PC-3 (cell line): ENCODE measurements at regions of chr16 and their contacts with region 1.

Region 1: DNA sequence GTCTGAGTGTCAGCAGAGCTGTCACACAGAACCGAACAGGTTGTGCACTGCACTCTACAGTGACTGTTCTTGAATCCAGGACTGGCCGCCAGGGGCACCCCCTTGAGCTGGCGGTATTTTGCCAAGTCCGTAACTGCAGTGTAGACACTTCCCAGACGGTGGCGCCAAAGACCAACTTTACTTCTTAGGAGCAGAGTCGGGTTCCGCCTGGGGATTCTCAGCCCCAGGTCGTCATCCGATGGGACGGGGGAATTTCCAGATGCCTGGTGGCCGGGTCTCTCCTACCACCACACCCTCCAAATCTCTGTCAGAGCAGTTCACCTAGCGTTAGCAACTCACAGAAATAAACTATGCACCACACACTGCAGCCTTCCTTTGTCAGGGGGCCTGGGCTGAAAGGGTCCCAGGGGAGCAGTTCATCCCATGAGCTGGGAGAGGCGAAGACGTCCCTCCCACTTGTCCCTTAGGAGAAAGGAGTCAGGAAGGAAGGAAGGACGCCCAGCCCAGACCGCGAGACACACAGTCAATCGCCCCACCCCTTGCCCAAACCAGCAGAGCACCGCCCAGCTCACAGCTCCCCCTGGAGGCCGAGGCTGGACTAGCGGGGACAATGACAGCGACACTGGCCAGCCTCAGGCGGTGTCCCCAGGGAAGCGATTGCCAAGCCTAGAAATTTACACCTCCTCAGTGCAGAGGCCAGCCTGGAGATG is 7.4 kb upstream of the RIPOR1 start:
- DNase-seq: peak; percentile 97
- ATAC-seq: peak; percentile 94
- H3K4me3 ChIP-seq: peak overlapping the region; percentile 73
- H3K27ac ChIP-seq: peak overlapping the region; percentile 75
- H3K4me1 ChIP-seq: peaks cover 7% of the 10 kb centered on the region
- H3K27me3 ChIP-seq: no peaks in the 10 kb centered on the region
- CTCF ChIP-seq: peak; percentile 74

Region 2: GRCh38 chr16:67490335-67491096 is 30.7 kb before region 1 on chr16:
- CTCF ChIA-PET with region 1: interaction called, 13 read pairs
- POLR2A ChIA-PET with region 1: no interaction called
- intact Hi-C with region 1: loop called (anchors 5 kb)
- DNase-seq: peak; percentile 32
- ATAC-seq: no peak
- H3K4me3 ChIP-seq: no peak overlapping the region
- H3K27ac ChIP-seq: no peak overlapping the region
- H3K4me1 ChIP-seq: no peaks in the 10 kb centered on the region
- H3K27me3 ChIP-seq: no peaks in the 10 kb centered on the region
- CTCF ChIP-seq: no peak

Region 3: GRCh38 chr16:67546761-67547422 is 25.6 kb after region 1 on chr16:
- CTCF ChIA-PET with region 1: interaction called, 12 read pairs
- POLR2A ChIA-PET with region 1: no interaction called
- intact Hi-C with region 1: no loop called
- DNase-seq: peak; percentile 72
- ATAC-seq: peak; percentile 74
- H3K4me3 ChIP-seq: no peak overlapping the region
- H3K27ac ChIP-seq: no peak overlapping the region
- H3K4me1 ChIP-seq: peaks cover under 1% of the 10 kb centered on the region; the same call in 1 of the 2 replicates
- H3K27me3 ChIP-seq: no peaks in the 10 kb centered on the region
- CTCF ChIP-seq: peak; percentile 81

Region 4: GRCh38 chr16:67641779-67642708 is 120.8 kb after region 1 on chr16:
- CTCF ChIA-PET with region 1: no interaction called
- POLR2A ChIA-PET with region 1: no interaction called
- intact Hi-C with region 1: no loop called
- DNase-seq: peak; percentile 15
- ATAC-seq: peak; percentile 76
- H3K4me3 ChIP-seq: no peak overlapping the region
- H3K27ac ChIP-seq: no peak overlapping the region
- H3K4me1 ChIP-seq: no peaks in the 10 kb centered on the region
- H3K27me3 ChIP-seq: no peaks in the 10 kb centered on the region
- CTCF ChIP-seq: no peak

Region 5: GRCh38 chr16:67667817-67668494 is 146.7 kb after region 1 on chr16:
- CTCF ChIA-PET with region 1: interaction called, 7 read pairs
- POLR2A ChIA-PET with region 1: no interaction called
- intact Hi-C with region 1: loop called (anchors 2 kb)
- DNase-seq: peak; percentile 72
- ATAC-seq: peak; percentile 68
- H3K4me3 ChIP-seq: no peak overlapping the region
- H3K27ac ChIP-seq: no peak overlapping the region
- H3K4me1 ChIP-seq: no peaks in the 10 kb centered on the region; the same call in 1 of the 2 replicates
- H3K27me3 ChIP-seq: no peaks in the 10 kb centered on the region
- CTCF ChIP-seq: peak; percentile 53

Region 6: GRCh38 chr16:67708368-67708861 is 187.2 kb after region 1 on chr16:
- CTCF ChIA-PET with region 1: no interaction called
- POLR2A ChIA-PET with region 1: no interaction called
- intact Hi-C with region 1: no loop called
- DNase-seq: peak; percentile 56
- ATAC-seq: peak; percentile 85
- H3K4me3 ChIP-seq: no peak overlapping the region
- H3K27ac ChIP-seq: no peak overlapping the region
- H3K4me1 ChIP-seq: peaks cover 5% of the 10 kb centered on the region; the same call in 1 of the 2 replicates
- H3K27me3 ChIP-seq: no peaks in the 10 kb centered on the region
- CTCF ChIP-seq: no peak